ENCODE measurements at regions of chr1 and their contacts with region 1.

Region 1: GRCh38 chr1:25223471-25223870 is 8.8 kb downstream of the SYF2 start:
- DNase-seq: no peak
- H3K4me3 Mint-ChIP-seq: no peak overlapping the region
- H3K27ac Mint-ChIP-seq: no peak overlapping the region
- H3K4me1 Mint-ChIP-seq: no peaks in the 10 kb centered on the region
- H3K27me3 Mint-ChIP-seq: no peaks in the 10 kb centered on the region
- CTCF ChIP-seq: no peak

Region 2: GRCh38 chr1:24978383-24979032 is 245.0 kb before region 1 on chr1:
- CTCF ChIA-PET with region 1: no interaction called
- POLR2A ChIA-PET with region 1: no interaction called
- intact Hi-C with region 1: no loop called
- DNase-seq: no peak
- H3K4me3 Mint-ChIP-seq: no peak overlapping the region
- H3K27ac Mint-ChIP-seq: no peak overlapping the region
- H3K4me1 Mint-ChIP-seq: no peaks in the 10 kb centered on the region
- H3K27me3 Mint-ChIP-seq: no peaks in the 10 kb centered on the region
- CTCF ChIP-seq: no peak

Region 3: GRCh38 chr1:25140073-25140797 is 83.2 kb before region 1 on chr1:
- CTCF ChIA-PET with region 1: no interaction called
- POLR2A ChIA-PET with region 1: no interaction called
- intact Hi-C with region 1: no loop called
- DNase-seq: no peak
- H3K4me3 Mint-ChIP-seq: no peak overlapping the region
- H3K27ac Mint-ChIP-seq: no peak overlapping the region
- H3K4me1 Mint-ChIP-seq: no peaks in the 10 kb centered on the region
- H3K27me3 Mint-ChIP-seq: peaks cover 57% of the 10 kb centered on the region
- CTCF ChIP-seq: no peak

Region 4: GRCh38 chr1:25239681-25240541 is 16.4 kb after region 1 on chr1:
- CTCF ChIA-PET with region 1: no interaction called
- POLR2A ChIA-PET with region 1: interaction called, 10 read pairs
- intact Hi-C with region 1: no loop called
- DNase-seq: peak; percentile 96
- H3K4me3 Mint-ChIP-seq: peak overlapping the region; percentile 78
- H3K27ac Mint-ChIP-seq: peak overlapping the region; percentile 85
- H3K4me1 Mint-ChIP-seq: peaks cover 24% of the 10 kb centered on the region
- H3K27me3 Mint-ChIP-seq: no peaks in the 10 kb centered on the region
- CTCF ChIP-seq: peak; percentile 48

Region 5: DNA sequence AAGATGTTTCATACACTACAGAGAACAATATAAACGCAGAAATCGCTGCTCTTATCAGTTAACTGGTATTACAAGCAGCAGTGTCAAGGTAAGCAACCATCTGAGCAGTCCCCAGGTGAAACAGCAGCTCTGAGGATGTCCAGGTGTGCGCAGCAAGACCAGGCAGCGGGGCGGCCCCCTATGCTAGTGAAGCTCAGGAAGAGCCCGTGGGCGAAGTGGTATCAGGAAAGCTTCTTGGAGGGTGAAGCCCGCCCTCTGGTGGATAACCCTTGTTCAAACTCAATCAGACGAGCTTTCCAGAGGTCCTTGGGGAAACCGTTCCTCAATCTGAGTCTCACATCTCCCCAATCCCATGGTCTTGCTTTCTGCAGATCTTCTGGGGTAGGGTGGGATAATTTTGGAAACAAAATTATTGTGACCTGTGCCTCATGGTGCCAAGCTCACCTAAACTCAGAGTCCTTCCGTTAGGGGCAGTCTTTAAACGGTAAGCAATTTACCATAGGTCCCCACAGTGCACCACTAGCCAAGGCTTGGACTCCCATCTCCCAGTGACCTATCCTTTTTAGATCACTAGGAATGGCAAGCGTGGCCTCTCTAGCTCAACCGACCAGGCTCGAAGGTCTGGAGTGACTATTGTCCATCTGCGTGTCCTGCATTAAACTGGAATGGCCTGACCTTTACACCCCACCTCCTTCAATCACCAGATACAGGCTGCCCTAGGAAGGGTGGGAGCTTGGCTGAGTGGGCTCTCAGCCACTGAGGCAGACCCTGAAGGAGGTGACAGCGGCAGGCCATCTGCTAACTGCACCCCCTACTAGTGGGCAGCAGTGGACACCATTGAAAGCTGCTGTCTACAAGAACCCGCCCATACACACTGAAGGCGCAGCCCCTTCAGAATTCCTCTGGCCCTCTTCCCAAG is 921.8 kb after region 1 on chr1:
- CTCF ChIA-PET with region 1: no interaction called
- POLR2A ChIA-PET with region 1: no interaction called
- intact Hi-C with region 1: no loop called
- DNase-seq: peak; percentile 90
- H3K4me3 Mint-ChIP-seq: no peak overlapping the region
- H3K27ac Mint-ChIP-seq: no peak overlapping the region
- H3K4me1 Mint-ChIP-seq: no peaks in the 10 kb centered on the region
- H3K27me3 Mint-ChIP-seq: peaks cover 12% of the 10 kb centered on the region
- CTCF ChIP-seq: peak; percentile 84

Measured in MCF 10A (cell line).